ENCODE measurements at regions of chr11 and their contacts with region 1.

Region 1: GRCh38 chr11:82682003-82682751 is 51.5 kb downstream of the FAM181B start:
- DNase-seq: peak; percentile 18 to 82
- H3K4me3 ChIP-seq: no peak overlapping the region
- H3K27ac ChIP-seq: no peak overlapping the region
- H3K4me1 ChIP-seq: peaks cover 11% of the 10 kb centered on the region
- H3K27me3 ChIP-seq: no peaks in the 10 kb centered on the region
- CTCF ChIP-seq: peak; percentile 91

Region 2: GRCh38 chr11:82507288-82507687 is 174.9 kb before region 1 on chr11:
- CTCF ChIA-PET with region 1: no interaction called
- POLR2A ChIA-PET with region 1: no interaction called
- intact Hi-C with region 1: no loop called
- DNase-seq: no peak
- H3K4me3 ChIP-seq: no peak overlapping the region
- H3K27ac ChIP-seq: no peak overlapping the region
- H3K4me1 ChIP-seq: no peaks in the 10 kb centered on the region
- H3K27me3 ChIP-seq: no peaks in the 10 kb centered on the region
- CTCF ChIP-seq: no peak

Region 3: DNA sequence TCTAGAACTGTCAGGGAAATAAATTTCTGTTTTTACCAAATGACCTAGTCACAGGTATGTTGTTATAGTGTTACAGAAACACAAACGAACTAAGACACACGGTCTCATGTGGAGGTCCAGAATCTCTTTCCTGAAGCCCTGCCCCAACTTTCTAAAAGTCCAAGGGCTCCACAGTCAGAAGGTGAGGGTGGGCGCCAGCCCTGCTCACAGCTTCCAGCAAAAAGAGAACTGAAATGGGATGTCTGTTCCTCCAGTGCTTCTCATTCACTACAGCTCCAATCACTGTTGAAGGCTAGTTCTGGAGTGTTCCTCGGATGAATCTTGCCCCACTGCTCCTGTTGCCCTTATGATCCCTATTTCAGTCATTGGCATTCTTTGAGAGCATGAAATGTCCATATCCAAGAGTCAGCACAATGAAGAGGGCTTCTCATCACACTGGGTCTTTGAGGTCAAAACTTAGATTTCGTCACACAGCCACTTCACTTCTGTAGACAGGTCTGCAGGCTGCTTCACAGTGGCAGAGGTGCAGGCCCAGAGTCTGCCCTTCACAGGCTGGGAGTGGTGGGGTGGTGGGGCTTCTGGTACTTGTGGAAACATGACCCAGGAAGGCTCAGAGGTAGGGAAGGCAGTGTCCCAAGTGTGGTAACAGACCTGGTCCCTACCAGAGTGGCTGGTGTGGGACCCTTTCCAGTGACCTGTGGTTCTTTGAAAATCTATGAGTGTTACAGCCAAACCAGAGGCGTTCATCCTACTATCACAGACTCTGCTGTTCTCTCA is 16.6 kb after region 1 on chr11:
- CTCF ChIA-PET with region 1: interaction called, 4 read pairs
- POLR2A ChIA-PET with region 1: no interaction called
- intact Hi-C with region 1: loop called (anchors 1 kb)
- DNase-seq: no peak
- H3K4me3 ChIP-seq: no peak overlapping the region
- H3K27ac ChIP-seq: no peak overlapping the region
- H3K4me1 ChIP-seq: no peaks in the 10 kb centered on the region
- H3K27me3 ChIP-seq: no peaks in the 10 kb centered on the region
- CTCF ChIP-seq: no peak